ENCODE measurements at regions of chr21 and their contacts with region 1.

Region 1: DNA sequence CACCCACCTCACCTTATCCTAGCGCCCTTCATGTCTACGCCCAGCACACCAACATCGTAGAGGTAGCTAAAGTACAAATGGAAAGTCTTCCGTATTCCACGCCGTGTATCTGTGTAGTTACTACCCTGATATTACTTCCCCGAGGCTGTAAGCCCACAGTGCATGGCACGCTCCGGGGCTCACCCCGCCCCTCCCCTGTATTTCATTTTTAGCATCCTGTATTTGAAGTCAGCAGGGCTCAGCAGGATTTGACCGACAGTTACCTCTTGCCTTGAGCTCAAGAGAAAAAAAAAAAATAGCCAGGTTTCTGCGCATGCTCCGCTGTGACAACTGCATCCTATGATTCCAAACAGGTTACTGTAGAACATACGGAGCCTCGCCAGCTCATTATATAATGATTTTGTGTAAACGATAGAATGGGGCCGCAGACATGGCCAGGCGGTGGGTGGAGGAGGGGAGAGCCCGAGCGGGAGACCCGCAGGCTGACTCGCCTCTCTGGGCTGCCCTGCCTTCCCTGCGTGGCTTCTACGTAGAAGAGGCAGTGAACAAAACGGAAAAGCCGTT is 1.3 kb downstream of the ABCG1 start:
- DNase-seq: peak; percentile 77
- H3K4me3 Mint-ChIP-seq: peak overlapping the region; percentile 91
- H3K27ac Mint-ChIP-seq: peak overlapping the region; percentile 86
- H3K4me1 Mint-ChIP-seq: peaks cover 14% of the 10 kb centered on the region
- H3K27me3 Mint-ChIP-seq: peaks cover 2% of the 10 kb centered on the region

Region 2: DNA sequence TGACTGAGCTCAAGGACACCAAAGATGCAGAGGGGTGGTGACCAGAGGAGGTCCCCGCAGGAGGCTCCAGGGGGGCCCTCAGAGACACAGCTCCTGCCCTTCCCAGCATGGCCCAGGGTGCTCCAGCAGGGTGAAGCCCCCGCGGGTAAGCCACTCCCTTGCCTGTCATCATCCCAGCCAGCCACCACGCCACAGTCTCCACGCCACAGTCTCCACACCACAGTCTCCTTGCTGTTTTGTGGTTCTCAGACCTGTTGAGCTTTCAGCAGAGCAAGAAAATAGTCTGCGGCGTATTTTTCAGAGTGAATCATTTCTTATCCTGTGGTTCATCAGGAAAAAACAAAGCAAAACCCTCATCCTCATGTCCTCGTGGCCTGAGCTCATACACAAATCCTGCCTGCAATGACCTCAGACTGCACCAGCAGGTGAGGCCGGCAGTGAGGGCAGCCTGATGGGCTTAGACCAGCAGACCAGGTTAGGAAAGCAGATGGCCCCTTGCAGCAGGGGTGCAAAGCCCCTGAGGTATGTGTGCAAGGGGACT is 27.0 kb before region 1 on chr21:
- intact Hi-C with region 1: loop called (anchors 1 kb)
- DNase-seq: peak; percentile 76
- H3K4me3 Mint-ChIP-seq: no peak overlapping the region
- H3K27ac Mint-ChIP-seq: no peak overlapping the region
- H3K4me1 Mint-ChIP-seq: peaks cover 57% of the 10 kb centered on the region
- H3K27me3 Mint-ChIP-seq: no peaks in the 10 kb centered on the region

Measured in activated T-helper 2 cell treated with anti-CD3 and anti-CD28 coated beads, Interferon-gamma antibody, Interleukin-2, Interleukin-4, amounts not matched to agents 10 μg/mL and 5 μg/mL and 100 μg/mL, durations not matched to agents 14 hours and 24 hours and 36 hours (primary cell).